ENCODE measurements at regions of chr1 and their contacts with region 1.

Region 1: DNA sequence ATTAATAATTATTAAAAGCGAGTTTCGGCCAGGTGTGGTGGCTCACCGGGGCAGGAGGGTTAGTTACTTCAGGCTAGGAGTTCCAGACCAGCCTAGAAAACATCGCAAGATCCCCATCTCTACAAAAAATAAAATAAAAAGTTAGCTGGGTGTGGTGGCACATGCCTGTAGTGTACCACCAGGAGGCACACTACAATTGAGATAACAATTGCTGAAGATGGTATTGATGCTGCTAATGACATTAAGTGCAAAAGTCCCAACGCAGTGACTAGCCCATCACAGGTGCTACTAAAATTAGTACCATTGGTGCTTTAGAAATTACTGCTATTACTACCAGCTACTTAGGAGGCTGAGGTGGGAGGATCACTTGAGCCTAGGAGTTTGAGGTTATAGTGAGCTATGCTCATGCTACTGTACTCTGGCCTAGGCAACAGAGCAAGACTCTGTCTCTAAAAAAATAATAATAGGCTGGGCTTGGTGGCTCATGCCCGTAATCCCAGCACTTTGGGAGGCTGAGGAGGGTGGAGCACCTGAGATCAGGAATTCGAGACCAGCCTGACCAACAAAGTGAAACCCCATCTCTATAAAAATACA is 156.6 kb downstream of the GREM2 start:
- DNase-seq: peak in 4 of 14 experiments; percentile 7 to 62 (median 48)
- ATAC-seq: no peak
- H3K4me3 ChIP-seq: no peak overlapping the region
- H3K4me3 Mint-ChIP-seq: no peak overlapping the region
- H3K27ac ChIP-seq: no peak overlapping the region
- H3K27ac Mint-ChIP-seq: no peak overlapping the region
- H3K4me1 ChIP-seq: no peaks in the 10 kb centered on the region
- H3K4me1 Mint-ChIP-seq: no peaks in the 10 kb centered on the region
- H3K27me3 ChIP-seq: no peaks in the 10 kb centered on the region
- H3K27me3 Mint-ChIP-seq: no peaks in the 10 kb centered on the region
- CTCF ChIP-seq: peak; percentile 29

Region 2: DNA sequence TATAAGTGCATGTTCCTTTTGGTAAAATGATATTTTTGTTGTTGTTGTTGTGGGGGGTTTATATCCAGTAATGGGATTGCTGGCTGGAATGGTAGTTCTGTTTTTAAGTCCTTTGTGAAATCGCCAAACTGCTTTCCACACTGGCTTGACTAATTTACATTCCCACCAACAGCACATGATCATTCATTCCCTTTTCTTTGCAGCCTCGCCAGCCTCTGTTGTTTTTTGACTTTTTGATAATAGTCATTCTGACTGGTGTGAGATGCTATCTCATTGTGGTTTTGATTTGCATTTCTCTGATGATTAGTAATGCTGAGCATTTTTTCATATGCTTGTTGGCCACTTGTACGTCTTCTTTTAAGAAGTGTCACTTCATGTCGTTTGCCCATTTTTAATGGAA is 1257.5 kb before region 1 on chr1:
- CTCF ChIA-PET with region 1: no interaction called
- POLR2A ChIA-PET with region 1: no interaction called
- intact Hi-C with region 1: no loop called
- DNase-seq: no peak
- ATAC-seq: no peak
- H3K4me3 ChIP-seq: no peak overlapping the region
- H3K4me3 Mint-ChIP-seq: no peak overlapping the region
- H3K27ac ChIP-seq: no peak overlapping the region
- H3K27ac Mint-ChIP-seq: no peak overlapping the region
- H3K4me1 ChIP-seq: no peaks in the 10 kb centered on the region
- H3K4me1 Mint-ChIP-seq: no peaks in the 10 kb centered on the region
- H3K27me3 ChIP-seq: no peaks in the 10 kb centered on the region
- H3K27me3 Mint-ChIP-seq: no peaks in the 10 kb centered on the region
- CTCF ChIP-seq: no peak

Region 3: DNA sequence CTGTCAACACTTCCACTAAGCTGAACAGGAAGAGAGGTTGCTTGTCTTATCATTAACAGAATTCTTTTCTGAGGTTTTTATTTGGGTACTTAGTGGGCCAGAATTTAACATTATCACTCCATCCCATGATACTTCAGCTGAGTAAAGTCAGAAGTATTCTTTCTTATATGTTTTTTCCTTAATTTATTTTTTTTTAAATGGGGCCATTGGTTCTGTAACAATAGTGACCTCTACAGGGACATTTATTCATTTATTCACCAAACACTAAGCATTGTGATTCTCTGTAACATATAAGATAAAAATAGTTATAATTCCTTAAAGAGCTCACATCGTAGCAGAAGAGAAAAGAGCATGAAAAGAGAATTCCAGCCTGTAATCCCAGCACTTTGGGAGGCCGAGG is 146.9 kb after region 1 on chr1:
- CTCF ChIA-PET with region 1: interaction called, 3 read pairs
- POLR2A ChIA-PET with region 1: no interaction called
- intact Hi-C with region 1: loop called in 1 of 2 experiments (anchors 5 kb)
- DNase-seq: no peak
- ATAC-seq: no peak
- H3K4me3 ChIP-seq: no peak overlapping the region
- H3K4me3 Mint-ChIP-seq: no peak overlapping the region
- H3K27ac ChIP-seq: no peak overlapping the region
- H3K27ac Mint-ChIP-seq: no peak overlapping the region
- H3K4me1 ChIP-seq: no peaks in the 10 kb centered on the region
- H3K4me1 Mint-ChIP-seq: no peaks in the 10 kb centered on the region
- H3K27me3 ChIP-seq: no peaks in the 10 kb centered on the region
- H3K27me3 Mint-ChIP-seq: no peaks in the 10 kb centered on the region
- CTCF ChIP-seq: no peak

Region 4: DNA sequence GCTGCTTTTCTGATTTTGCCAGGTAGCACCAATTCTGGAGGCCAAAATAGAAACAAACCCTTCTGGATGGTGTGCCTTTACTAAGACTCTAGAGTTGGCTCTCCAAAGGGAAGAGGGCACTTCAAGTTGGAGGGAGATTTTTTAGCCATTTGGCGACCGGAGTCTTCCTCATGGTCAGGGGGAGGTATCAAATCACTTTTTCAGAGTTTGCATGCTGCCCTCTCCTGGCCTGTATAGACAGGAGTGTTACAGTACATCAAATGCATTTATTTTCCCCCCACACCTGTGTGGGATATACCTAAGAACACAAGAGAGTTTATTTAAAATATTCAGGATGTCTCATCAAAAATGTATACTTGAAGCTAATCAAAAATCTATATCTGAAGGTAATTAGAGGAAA is 153.4 kb after region 1 on chr1:
- CTCF ChIA-PET with region 1: interaction called, 3 read pairs
- POLR2A ChIA-PET with region 1: no interaction called
- intact Hi-C with region 1: loop called (anchors 2 to 5 kb)
- DNase-seq: peak in 5 of 14 experiments; percentile 1 to 51 (median 29)
- ATAC-seq: no peak
- H3K4me3 ChIP-seq: no peak overlapping the region
- H3K4me3 Mint-ChIP-seq: no peak overlapping the region
- H3K27ac ChIP-seq: no peak overlapping the region
- H3K27ac Mint-ChIP-seq: no peak overlapping the region
- H3K4me1 ChIP-seq: peaks cover 13% of the 10 kb centered on the region
- H3K4me1 Mint-ChIP-seq: peaks cover 27% of the 10 kb centered on the region
- H3K27me3 ChIP-seq: peaks cover 4 to 5% of the 10 kb centered on the region in 2 experiments
- H3K27me3 Mint-ChIP-seq: peaks cover 48% of the 10 kb centered on the region
- CTCF ChIP-seq: peak; percentile 39

Region 5: GRCh38 chr1:240691521-240692338 is 236.4 kb after region 1 on chr1:
- CTCF ChIA-PET with region 1: interaction called, 5 read pairs
- POLR2A ChIA-PET with region 1: no interaction called
- intact Hi-C with region 1: loop called in 1 of 2 experiments (anchors 5 kb)
- DNase-seq: peak in 7 of 14 experiments; percentile 5 to 59 (median 10)
- ATAC-seq: no peak
- H3K4me3 ChIP-seq: no peak overlapping the region
- H3K4me3 Mint-ChIP-seq: no peak overlapping the region
- H3K27ac ChIP-seq: no peak overlapping the region
- H3K27ac Mint-ChIP-seq: no peak overlapping the region
- H3K4me1 ChIP-seq: peaks cover 10% of the 10 kb centered on the region
- H3K4me1 Mint-ChIP-seq: peaks cover 9% of the 10 kb centered on the region
- H3K27me3 ChIP-seq: no peaks in the 10 kb centered on the region
- H3K27me3 Mint-ChIP-seq: no peaks in the 10 kb centered on the region
- CTCF ChIP-seq: no peak

Measured in CD4-positive, alpha-beta T cell (primary cell).